ENCODE measurements at regions of chr12 and their contacts with region 1.

Region 1: DNA sequence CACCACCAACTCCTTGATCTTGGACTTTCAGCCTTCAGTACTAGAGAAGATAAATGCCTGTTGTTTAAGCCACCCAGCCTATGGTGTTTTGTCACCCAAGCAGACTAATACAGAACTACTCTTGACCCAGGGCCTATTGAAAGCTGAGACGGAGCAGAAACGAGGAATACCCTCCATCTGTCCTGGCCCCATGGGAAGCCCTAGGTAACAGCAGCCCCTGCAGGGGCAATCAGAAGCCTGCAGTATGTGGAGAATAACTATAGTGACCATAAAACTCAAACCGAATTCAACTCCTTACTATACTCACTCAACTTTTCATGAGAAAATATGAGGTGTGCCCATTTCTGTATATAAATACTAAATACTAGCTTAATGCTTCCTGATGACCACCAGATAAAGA is 307.4 kb downstream of the NUAK1 start:
- DNase-seq: no peak
- H3K4me3 ChIP-seq: no peak overlapping the region
- H3K27ac ChIP-seq: no peak overlapping the region
- H3K4me1 ChIP-seq: peaks cover 4% of the 10 kb centered on the region
- H3K27me3 ChIP-seq: no peaks in the 10 kb centered on the region
- CTCF ChIP-seq: no peak

Region 2: GRCh38 chr12:105843986-105844760 is 12.8 kb after region 1 on chr12:
- CTCF ChIA-PET with region 1: no interaction called
- dilution Hi-C with region 1: no loop called
- in situ Hi-C with region 1: no loop called
- intact Hi-C with region 1: no loop called
- DNase-seq: no peak
- H3K4me3 ChIP-seq: no peak overlapping the region
- H3K27ac ChIP-seq: no peak overlapping the region
- H3K4me1 ChIP-seq: no peaks in the 10 kb centered on the region
- H3K27me3 ChIP-seq: no peaks in the 10 kb centered on the region
- CTCF ChIP-seq: no peak

Region 3: DNA sequence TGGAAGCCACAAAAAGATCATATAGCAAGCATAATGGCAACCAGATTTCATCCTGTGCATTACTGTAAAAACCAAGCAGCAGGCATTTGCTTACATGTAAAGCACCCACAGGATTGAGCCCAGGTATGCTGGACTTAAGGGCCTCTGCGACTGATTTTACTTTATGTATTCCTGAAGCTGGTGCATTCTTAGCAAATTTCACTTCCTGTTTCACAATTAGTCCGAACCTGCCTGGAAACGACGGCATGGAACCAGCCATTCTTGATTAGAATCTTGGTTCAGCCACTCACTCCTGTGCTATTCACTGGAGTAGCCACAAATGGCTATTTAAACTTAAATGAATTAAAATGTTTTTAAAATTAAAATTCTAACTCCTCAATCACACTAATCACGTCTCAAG is 68.2 kb after region 1 on chr12:
- CTCF ChIA-PET with region 1: no interaction called
- dilution Hi-C with region 1: loop called (anchors 5 kb)
- in situ Hi-C with region 1: no loop called
- intact Hi-C with region 1: no loop called
- DNase-seq: no peak
- H3K4me3 ChIP-seq: no peak overlapping the region
- H3K27ac ChIP-seq: no peak overlapping the region
- H3K4me1 ChIP-seq: peaks cover 3% of the 10 kb centered on the region
- H3K27me3 ChIP-seq: no peaks in the 10 kb centered on the region
- CTCF ChIP-seq: no peak